ENCODE measurements at regions of chr5 and their contacts with region 1.

Region 1: GRCh38 chr5:56814963-56815658 is at the start of gene MAP3K1:
- DNase-seq: peak; percentile 85
- ATAC-seq: peak; percentile 89 to 91
- total RNA-seq, gene MAP3K1: 8.4 to 8.5 TPM

Region 2: DNA sequence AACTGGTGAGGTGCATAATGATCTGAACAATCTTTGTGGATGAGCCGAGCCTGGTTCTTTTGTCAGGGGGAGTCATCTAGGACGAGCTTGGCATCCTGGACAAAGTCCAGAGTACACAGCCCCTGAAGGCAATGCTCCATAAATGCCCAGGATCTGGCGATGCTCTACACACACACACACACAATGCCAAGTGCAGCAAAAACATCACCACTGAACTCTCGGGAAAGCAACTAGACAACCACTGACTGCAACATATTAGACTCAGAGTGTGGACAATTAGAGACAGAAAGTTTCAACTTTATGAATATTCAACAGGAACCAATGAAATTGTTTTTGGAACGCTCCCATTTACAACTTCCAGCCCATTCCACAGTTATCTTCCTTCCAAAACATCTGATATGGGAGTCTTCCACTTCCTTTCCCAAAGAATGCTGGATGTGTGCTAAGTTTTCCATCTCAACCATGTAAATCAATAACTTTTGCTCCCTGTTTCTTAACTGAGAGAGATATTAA is 354.4 kb before region 1 on chr5:
- intact Hi-C with region 1: loop called in 1 of 2 experiments (anchors 10 kb)
- DNase-seq: no peak
- ATAC-seq: peak; percentile 14 to 23

Region 3: GRCh38 chr5:56588636-56589480 is 226.3 kb before region 1 on chr5:
- intact Hi-C with region 1: loop called in 1 of 2 experiments (anchors 10 kb)
- DNase-seq: peak; percentile 62
- ATAC-seq: peak; percentile 36 to 57

Region 4: GRCh38 chr5:56893251-56893951 is 78.3 kb after region 1 on chr5:
- intact Hi-C with region 1: no loop called
- DNase-seq: no peak
- ATAC-seq: no peak